CD8-positive, alpha-beta memory T cell (primary cell): ENCODE measurements at regions of chr2 and their contacts with region 1.

Region 1: DNA sequence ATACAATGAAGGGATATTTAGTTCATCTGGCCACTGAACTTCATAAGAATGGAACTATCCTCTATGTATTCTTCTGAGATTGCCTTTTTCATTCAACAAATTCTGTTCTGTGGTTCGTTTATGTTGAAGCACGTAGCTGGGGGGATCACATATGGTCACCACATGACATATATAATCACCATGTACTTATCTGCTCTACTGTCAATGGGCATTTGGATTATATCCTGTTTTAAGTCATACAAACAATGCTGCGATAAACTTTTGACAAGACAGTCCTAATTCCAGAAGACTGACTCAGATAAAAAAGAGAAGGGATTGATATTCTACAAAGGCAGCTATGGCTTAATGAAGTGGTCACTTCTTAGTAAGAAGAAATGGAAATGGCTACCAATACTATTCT is 116.0 kb upstream of the CCDC195 start:
- DNase-seq: no peak
- H3K4me3 ChIP-seq: no peak overlapping the region
- H3K4me3 Mint-ChIP-seq: no peak overlapping the region
- H3K27ac ChIP-seq: no peak overlapping the region
- H3K27ac Mint-ChIP-seq: peak overlapping the region in 2 of 8 donors; percentile 38 to 44
- H3K4me1 ChIP-seq: no peaks in the 10 kb centered on the region
- H3K4me1 Mint-ChIP-seq: peaks cover 0 to 4% (median 0%) of the 10 kb centered on the region in 3 donors
- H3K27me3 ChIP-seq: no peaks in the 10 kb centered on the region
- H3K27me3 Mint-ChIP-seq: no peaks in the 10 kb centered on the region

Region 2: DNA sequence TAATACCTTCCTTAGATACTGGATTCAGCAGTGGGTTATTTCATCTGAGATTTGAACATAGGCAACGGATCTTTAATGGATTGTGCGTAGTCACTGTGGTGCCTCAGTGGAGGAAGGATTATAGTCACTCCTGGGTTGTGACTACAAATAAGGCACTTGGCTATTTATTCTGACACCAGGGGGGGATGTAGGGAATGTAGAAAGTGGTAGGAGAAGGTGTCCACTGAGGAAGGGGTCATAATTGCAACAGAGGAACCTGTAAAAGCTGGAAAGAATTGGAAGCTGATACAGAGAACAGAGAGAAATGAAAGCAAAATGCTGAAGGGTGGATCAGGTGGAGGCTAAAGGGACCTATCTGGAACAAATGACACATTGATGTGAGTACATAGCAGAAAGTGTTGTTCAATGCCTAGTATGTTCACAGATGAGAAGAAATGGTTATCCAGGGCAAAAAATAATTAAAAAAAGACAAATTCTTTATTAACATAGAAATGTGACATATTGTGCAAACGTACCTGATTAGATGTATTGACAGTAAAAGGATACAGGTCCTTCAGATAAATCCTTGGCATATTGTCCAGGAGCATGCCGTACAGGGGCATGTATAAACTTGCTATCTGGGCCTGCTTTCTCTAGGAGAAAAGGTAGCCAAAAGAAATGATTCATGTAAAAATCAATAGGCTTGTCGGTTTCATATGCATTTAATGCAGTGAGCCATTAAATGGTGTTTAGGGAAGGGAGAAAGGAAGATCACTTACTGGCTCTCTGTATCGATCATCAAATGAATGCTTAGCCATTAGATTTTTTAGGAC is 24.8 kb before region 1 on chr2:
- CTCF ChIA-PET with region 1: no interaction called
- POLR2A ChIA-PET with region 1: interaction called, 12 read pairs
- DNase-seq: no peak
- H3K4me3 ChIP-seq: no peak overlapping the region
- H3K4me3 Mint-ChIP-seq: no peak overlapping the region
- H3K27ac ChIP-seq: no peak overlapping the region
- H3K27ac Mint-ChIP-seq: peak overlapping the region in 1 of 8 donors; percentile 15
- H3K4me1 ChIP-seq: no peaks in the 10 kb centered on the region
- H3K4me1 Mint-ChIP-seq: no peaks in the 10 kb centered on the region
- H3K27me3 ChIP-seq: no peaks in the 10 kb centered on the region
- H3K27me3 Mint-ChIP-seq: no peaks in the 10 kb centered on the region

Region 3: GRCh38 chr2:224819075-224819474 is 13.1 kb before region 1 on chr2:
- CTCF ChIA-PET with region 1: no interaction called
- POLR2A ChIA-PET with region 1: no interaction called
- DNase-seq: no peak
- H3K4me3 ChIP-seq: no peak overlapping the region
- H3K4me3 Mint-ChIP-seq: no peak overlapping the region
- H3K27ac ChIP-seq: no peak overlapping the region
- H3K27ac Mint-ChIP-seq: peak overlapping the region in 2 of 8 donors; percentile 4 to 18
- H3K4me1 ChIP-seq: no peaks in the 10 kb centered on the region
- H3K4me1 Mint-ChIP-seq: peaks cover 0 to 3% (median 0%) of the 10 kb centered on the region in 3 donors
- H3K27me3 ChIP-seq: no peaks in the 10 kb centered on the region
- H3K27me3 Mint-ChIP-seq: no peaks in the 10 kb centered on the region

Region 4: DNA sequence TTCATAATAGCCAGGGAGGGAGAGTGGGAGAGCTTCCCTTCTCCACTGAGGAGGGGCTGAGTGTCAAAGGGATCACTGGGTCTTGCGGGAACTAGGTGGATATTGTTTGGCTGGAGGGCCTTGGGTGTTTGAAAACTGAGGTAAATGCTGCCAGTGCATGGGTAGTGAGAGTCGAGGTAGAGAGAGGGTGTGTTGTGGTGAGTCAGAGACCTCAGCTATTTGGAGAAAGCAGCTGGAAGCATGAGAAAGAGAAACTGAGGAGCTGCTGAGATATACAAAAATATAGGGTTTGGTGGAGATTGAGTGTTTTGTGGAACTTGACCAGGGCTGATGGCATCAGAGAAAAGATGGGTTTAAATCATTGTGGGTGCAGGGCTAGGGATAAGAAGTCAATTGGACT is 10.9 kb after region 1 on chr2:
- CTCF ChIA-PET with region 1: no interaction called
- POLR2A ChIA-PET with region 1: no interaction called
- DNase-seq: no peak
- H3K4me3 ChIP-seq: no peak overlapping the region
- H3K4me3 Mint-ChIP-seq: no peak overlapping the region
- H3K27ac ChIP-seq: no peak overlapping the region
- H3K27ac Mint-ChIP-seq: peak overlapping the region in 3 of 8 donors; percentile 12 to 75 (median 28)
- H3K4me1 ChIP-seq: no peaks in the 10 kb centered on the region
- H3K4me1 Mint-ChIP-seq: no peaks in the 10 kb centered on the region
- H3K27me3 ChIP-seq: no peaks in the 10 kb centered on the region
- H3K27me3 Mint-ChIP-seq: no peaks in the 10 kb centered on the region